RWPE1 (cell line): ENCODE measurements at regions of chr20 and their contacts with region 1.

Region 1: DNA sequence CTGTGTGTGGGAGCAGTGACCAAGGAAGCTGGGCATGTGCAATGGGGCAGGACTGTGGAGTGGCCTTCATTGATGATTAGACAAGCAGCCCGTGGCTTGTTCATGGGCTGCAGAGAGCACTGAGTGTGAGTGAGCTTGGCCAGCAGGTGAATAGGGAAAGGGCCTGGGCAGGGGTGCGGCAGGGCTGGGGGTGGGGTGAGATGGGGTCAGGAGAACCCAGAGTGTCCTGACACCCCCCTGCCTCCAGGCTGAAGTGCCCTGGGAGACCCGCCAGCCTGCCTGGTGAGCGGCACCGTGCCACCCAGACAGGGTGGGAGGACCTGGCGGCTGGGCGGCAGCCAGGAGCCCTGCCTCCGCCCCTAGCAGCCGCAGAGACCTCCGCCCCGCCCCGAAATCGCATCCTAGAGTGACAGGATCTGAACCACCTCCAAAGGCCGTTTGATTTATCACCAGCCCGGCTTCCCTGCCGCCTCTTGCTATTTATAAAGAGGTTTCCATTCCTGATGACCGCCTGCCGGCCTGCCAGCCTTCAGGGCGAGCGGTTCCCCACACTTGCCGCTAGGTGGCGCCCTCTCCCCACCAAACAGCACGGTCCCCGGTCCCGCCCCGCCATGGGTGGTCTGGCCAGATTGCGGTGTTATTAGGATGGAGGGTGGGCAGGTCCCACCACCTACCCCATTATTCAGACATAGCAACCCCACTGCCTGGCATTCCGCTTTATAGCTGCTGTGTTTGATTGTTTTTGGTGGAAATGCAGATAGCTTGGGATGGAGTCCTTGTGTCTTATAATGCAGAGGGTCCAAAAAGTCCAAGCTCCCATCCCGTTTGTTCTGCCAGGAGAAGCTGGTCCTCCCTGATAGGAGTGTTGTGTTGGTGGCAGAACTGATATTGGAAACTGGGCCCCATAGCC is 3.5 kb downstream of the MYLK2 start:
- DNase-seq: peak; percentile 92
- H3K27ac ChIP-seq: peak overlapping the region; percentile 28
- CTCF ChIP-seq: peak; percentile 100

Region 2: DNA sequence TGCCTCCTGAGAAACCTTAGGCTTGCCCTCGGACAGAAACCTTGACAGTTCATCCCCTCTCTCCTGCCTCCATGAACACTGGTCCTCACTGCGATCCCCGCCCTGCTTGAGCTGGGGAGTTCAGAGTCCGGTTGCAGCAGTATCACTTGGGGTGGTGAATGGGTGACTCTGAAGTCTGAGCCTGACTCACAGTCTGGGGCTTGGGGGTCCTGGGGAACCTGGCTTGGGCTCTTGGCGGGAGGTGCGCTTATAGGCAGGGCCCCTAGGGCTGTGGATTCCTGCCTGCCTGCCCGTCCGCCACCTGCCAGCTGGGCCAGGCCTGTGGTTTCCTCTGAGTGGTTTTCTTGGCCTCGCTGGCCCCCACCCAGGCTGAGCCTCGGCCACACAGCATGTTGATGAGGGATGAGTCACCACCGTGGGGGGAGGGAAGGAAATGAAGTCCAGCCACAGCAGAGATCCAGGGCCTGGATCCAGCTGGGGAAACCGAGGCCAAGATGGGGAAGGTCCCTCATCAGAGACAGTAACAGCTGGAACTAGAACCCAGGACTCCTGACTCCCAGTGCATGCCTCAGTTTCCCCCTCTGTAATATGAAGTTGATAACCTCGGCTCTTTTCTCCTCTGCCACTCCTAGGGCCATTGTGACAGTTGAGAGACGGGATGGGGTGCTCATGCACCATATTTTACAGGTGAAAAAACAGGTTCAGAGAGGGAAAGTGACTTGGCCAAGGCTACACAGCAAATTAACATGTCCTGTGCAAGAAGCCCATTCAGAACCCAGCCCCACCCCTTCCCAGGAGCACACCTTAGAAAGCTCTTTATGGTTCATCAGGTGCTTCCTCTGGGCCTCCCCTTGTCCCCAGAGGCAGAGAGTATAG is 13.5 kb after region 1 on chr20:
- CTCF ChIA-PET with region 1: interaction called, 51 read pairs
- POLR2A ChIA-PET with region 1: no interaction called
- DNase-seq: peak; percentile 97
- H3K27ac ChIP-seq: peak overlapping the region; percentile 44
- CTCF ChIP-seq: no peak

Region 3: GRCh38 chr20:31849455-31849925 is 26.8 kb after region 1 on chr20:
- CTCF ChIA-PET with region 1: interaction called, 66 read pairs
- POLR2A ChIA-PET with region 1: no interaction called
- DNase-seq: no peak
- H3K27ac ChIP-seq: no peak overlapping the region
- CTCF ChIP-seq: no peak

Region 4: GRCh38 chr20:31951530-31952453 is 129.1 kb after region 1 on chr20 and contains the start of gene PDRG1:
- CTCF ChIA-PET with region 1: interaction called, 32 read pairs
- POLR2A ChIA-PET with region 1: no interaction called
- DNase-seq: peak; percentile 98
- H3K27ac ChIP-seq: peak within 1 kb of the TSS; percentile 61
- CTCF ChIP-seq: peak; percentile 100

Region 5: DNA sequence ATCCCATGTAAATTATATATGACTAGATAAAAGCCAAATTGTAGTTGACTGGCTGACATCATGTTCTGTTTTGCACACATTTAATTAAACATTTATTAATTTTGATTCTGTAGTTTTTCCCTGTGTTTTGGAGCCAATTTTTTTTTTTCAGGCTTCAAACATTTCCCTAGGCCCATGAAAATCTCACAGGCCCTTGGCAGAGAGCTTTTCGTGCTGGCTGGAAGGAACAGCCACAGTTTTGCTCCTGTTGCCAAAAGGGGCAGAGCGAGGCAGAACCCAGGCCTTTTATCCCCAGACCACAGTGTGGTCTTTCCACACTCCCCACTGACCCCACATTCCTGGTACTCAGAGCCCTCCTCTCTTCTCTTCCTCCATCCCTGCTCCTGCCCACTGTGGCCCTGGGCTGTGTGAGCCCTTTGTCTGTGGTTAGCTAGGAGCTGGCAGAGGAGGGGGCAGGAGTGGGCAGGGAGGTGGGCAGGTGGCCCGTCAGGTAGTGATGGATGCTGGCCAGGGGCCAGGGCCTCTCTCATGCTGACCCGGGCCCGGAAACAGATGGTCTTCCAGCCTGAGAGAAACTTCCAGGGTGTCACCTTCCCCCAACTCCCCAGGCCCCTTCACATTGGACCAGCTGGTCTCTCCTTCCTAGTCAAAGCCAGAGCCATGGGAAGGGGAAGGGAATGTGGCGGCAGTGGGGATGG is 168.1 kb after region 1 on chr20:
- CTCF ChIA-PET with region 1: interaction called, 10 read pairs
- POLR2A ChIA-PET with region 1: no interaction called
- DNase-seq: no peak
- H3K27ac ChIP-seq: no peak overlapping the region
- CTCF ChIP-seq: no peak

Region 6: DNA sequence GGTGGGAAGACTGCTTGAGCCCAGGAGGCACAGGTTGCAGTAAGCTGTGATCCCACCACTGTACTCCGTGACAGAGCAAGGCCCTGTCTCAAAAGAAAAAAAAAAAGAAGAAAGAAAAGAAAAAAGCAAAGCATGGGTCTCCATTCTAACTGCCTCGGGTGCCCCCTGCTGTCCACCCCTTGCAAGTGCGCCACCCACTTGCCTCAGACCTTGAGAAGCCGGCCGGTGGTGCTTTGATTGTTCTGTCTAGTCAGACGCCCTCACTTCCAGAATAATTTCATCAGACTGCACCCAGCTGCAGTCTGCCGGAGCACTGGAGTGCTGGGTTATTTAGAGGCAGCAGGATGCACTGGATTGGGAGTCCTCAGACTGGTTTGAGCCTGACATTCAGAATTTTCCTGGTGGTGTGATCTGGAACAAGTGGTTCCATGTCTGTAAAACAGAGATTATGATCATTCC is 269.2 kb after region 1 on chr20:
- CTCF ChIA-PET with region 1: interaction called, 14 read pairs
- POLR2A ChIA-PET with region 1: no interaction called
- DNase-seq: peak; percentile 79
- H3K27ac ChIP-seq: no peak overlapping the region
- CTCF ChIP-seq: peak; percentile 98